Tibial artery (tissue), 4 donors: ENCODE measurements at regions of chr3 and their contacts with region 1.

Region 1: GRCh38 chr3:122942937-122943827 is 84.4 kb downstream of the SEMA5B start:
- DNase-seq: peak; percentile 66 to 87
- H3K4me3 ChIP-seq: no peak overlapping the region
- H3K27ac ChIP-seq: no peak overlapping the region
- H3K4me1 ChIP-seq: peaks cover 0 to 40% (median 20%) of the 10 kb centered on the region in 4 donors
- H3K27me3 ChIP-seq: no peaks in the 10 kb centered on the region
- CTCF ChIP-seq: peak; percentile 95 to 96

Region 2: DNA sequence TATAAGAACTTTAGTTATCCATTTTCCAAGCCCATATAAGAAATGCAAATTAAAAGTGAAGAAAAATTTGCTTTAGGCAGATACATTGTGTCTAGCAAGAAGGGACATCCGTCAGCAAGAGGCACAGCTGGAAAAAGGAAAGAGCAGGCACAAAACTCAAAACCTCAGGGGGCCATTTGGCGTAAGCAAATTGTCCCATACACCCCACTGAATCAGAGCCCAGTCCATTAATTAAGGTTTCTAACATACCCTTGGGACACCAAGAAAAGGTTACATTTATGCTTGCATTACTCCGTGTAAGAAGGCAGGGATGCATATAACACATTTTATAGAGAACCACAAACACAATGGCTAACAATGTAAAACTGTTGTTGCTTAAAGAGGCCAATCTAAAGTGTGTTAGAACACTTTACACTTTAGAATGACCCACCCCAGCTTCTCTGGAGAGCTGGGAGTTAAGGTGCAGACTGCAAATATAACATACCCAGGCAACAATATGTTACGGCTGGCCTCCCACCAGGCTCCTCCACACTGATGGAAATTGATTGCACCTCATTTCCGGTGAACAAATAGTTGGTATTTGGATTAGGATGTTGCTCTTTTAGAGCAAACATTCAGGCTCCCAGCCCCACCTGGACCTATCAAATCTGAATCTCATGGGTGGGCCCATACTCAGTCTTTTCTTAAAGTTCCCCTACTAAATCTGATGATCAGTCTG is 61.2 kb after region 1 on chr3:
- intact Hi-C with region 1: no loop called
- DNase-seq: no peak
- H3K4me3 ChIP-seq: no peak overlapping the region
- H3K27ac ChIP-seq: no peak overlapping the region
- H3K4me1 ChIP-seq: no peaks in the 10 kb centered on the region
- H3K27me3 ChIP-seq: peaks cover 0 to 21% of the 10 kb centered on the region in 2 donors
- CTCF ChIP-seq: no peak

Region 3: GRCh38 chr3:123028233-123028828 is 85.1 kb after region 1 on chr3:
- intact Hi-C with region 1: loop called (anchors 2 kb)
- DNase-seq: peak in 1 of 2 donors; percentile 51
- H3K4me3 ChIP-seq: peak overlapping the region; percentile 51 to 64
- H3K27ac ChIP-seq: peak overlapping the region in 1 of 2 donors; percentile 4
- H3K4me1 ChIP-seq: peaks cover 0 to 28% (median 26%) of the 10 kb centered on the region in 4 donors
- H3K27me3 ChIP-seq: peaks cover 0 to 44% of the 10 kb centered on the region in 2 donors
- CTCF ChIP-seq: peak; percentile 56 to 63

Region 4: GRCh38 chr3:123258811-123259420 is 315.7 kb after region 1 on chr3:
- intact Hi-C with region 1: loop called (anchors 5 kb)
- DNase-seq: no peak
- H3K4me3 ChIP-seq: no peak overlapping the region
- H3K27ac ChIP-seq: no peak overlapping the region
- H3K4me1 ChIP-seq: no peaks in the 10 kb centered on the region
- H3K27me3 ChIP-seq: no peaks in the 10 kb centered on the region
- CTCF ChIP-seq: peak; percentile 71 to 76

Region 5: GRCh38 chr3:123390865-123391600 is 447.9 kb after region 1 on chr3:
- intact Hi-C with region 1: no loop called
- DNase-seq: peak in 1 of 2 donors; percentile 43
- H3K4me3 ChIP-seq: no peak overlapping the region
- H3K27ac ChIP-seq: peak overlapping the region; percentile 89 to 96
- H3K4me1 ChIP-seq: peaks cover 0 to 98% (median 73%) of the 10 kb centered on the region in 4 donors
- H3K27me3 ChIP-seq: no peaks in the 10 kb centered on the region
- CTCF ChIP-seq: no peak

Region 6: GRCh38 chr3:123559040-123559861 is 616.1 kb after region 1 on chr3:
- intact Hi-C with region 1: loop called (anchors 10 kb)
- DNase-seq: no peak
- H3K4me3 ChIP-seq: no peak overlapping the region
- H3K27ac ChIP-seq: no peak overlapping the region
- H3K4me1 ChIP-seq: no peaks in the 10 kb centered on the region
- H3K27me3 ChIP-seq: no peaks in the 10 kb centered on the region
- CTCF ChIP-seq: peak; percentile 82 to 88